SK-N-SH (cell line): ENCODE measurements at regions of chr22 and their contacts with region 1.

Region 1: DNA sequence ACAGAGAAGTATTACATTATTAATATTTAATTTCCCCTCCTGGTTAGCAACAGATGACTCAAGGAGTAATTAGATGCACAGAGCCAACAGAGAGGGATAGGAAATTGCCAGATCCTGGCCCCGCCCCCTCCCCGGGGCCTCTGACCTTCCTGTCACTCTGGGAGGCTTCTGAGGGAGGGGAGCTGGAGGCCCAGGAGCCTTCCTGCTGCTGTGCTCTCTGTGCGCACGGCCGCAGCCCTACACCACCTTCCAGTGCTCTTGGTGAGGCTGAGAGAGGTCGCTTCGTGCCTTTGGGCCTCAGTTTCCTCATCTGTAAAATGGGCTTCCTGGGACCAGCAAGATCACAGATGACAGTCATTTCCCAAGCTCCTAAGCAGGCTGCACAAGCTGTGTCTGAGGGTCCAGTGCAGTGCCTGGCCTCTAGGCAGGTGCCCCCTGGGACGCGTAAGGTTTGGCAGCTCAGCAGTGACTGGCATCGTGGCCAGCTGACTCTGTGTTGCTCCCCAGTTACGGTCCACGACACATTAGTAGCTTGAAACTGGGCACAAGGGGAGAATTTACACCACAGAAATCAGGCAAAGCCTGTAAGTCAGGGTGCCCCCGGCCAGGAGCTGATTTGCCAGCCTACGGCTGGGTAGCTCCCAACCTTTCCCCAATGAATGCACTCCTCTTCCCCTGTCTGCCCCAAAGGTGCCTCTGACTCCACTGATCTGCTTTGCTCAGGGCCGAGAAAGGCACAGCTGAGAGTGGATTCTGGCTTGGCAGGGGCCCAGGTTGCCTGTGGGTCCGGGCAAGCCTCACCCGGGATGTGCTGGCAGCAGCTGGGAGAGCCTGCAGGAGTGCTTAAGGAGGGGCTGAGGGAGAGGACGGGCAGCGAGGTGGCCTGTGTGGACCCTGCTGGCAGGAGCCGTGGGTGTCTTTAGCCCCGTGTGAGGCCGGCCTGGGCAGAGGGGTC is 2.3 kb downstream of the ADORA2A start:
- DNase-seq: peak; percentile 68
- H3K4me3 ChIP-seq: no peak overlapping the region
- H3K27ac ChIP-seq: peak overlapping the region in 1 of 2 experiments; percentile 89; a peak in 1 of 4 replicates
- H3K4me1 ChIP-seq: peaks cover 17 to 97% of the 10 kb centered on the region in 2 experiments; a peak in 3 of 4 replicates
- H3K27me3 ChIP-seq: no peaks in the 10 kb centered on the region
- CTCF ChIP-seq: no peak
- EP300 ChIP-seq: no peak
- RAD21 ChIP-seq: peak; percentile 21; the same call in 1 of the 2 replicates

Region 2: DNA sequence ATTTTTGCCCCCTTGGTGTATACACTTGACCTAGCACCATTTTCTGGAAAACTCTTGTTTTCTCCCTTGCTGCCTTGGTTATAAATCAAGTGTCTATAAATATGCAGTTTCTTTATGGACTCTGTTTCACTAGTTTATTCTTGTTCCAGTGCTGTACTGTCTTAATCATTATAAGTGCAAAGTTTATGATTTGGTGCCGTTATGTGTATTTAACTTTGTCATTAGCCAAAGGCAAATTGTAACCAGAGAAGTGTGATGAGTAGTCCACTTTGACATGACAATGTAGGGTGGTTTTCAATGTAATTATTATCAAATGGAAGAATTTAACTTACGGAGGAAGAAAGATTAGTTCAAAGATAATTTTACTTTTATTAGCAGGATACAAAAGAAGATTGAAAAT is 118.7 kb before region 1 on chr22:
- CTCF ChIA-PET with region 1: no interaction called
- POLR2A ChIA-PET with region 1: no interaction called
- DNase-seq: no peak
- H3K4me3 ChIP-seq: no peak overlapping the region
- H3K27ac ChIP-seq: no peak overlapping the region
- H3K4me1 ChIP-seq: no peaks in the 10 kb centered on the region
- H3K27me3 ChIP-seq: no peaks in the 10 kb centered on the region
- CTCF ChIP-seq: no peak
- EP300 ChIP-seq: no peak
- RAD21 ChIP-seq: no peak

Region 3: GRCh38 chr22:24440718-24441405 is 11.2 kb after region 1 on chr22:
- CTCF ChIA-PET with region 1: interaction called, 29 read pairs
- POLR2A ChIA-PET with region 1: interaction called, 4 read pairs
- DNase-seq: peak; percentile 23
- H3K4me3 ChIP-seq: no peak overlapping the region
- H3K27ac ChIP-seq: peak overlapping the region in 1 of 2 experiments; percentile 91; a peak in 2 of 4 replicates
- H3K4me1 ChIP-seq: peaks cover 8 to 89% of the 10 kb centered on the region in 2 experiments
- H3K27me3 ChIP-seq: no peaks in the 10 kb centered on the region
- CTCF ChIP-seq: no peak
- EP300 ChIP-seq: no peak
- RAD21 ChIP-seq: no peak

Region 4: GRCh38 chr22:24466716-24467328 is 37.1 kb after region 1 on chr22:
- CTCF ChIA-PET with region 1: no interaction called
- POLR2A ChIA-PET with region 1: no interaction called
- DNase-seq: no peak
- H3K4me3 ChIP-seq: peak overlapping the region in 1 of 2 experiments; percentile 34; a peak in 1 of 4 replicates
- H3K27ac ChIP-seq: peak overlapping the region; percentile 57 to 89
- H3K4me1 ChIP-seq: peaks cover 0 to 17% of the 10 kb centered on the region in 2 experiments; a peak in 3 of 4 replicates
- H3K27me3 ChIP-seq: no peaks in the 10 kb centered on the region
- CTCF ChIP-seq: no peak
- EP300 ChIP-seq: no peak
- RAD21 ChIP-seq: no peak